A549 (cell line): ENCODE measurements at regions of chr1 and their contacts with region 1.

Region 1: GRCh38 chr1:228664399-228664914 is 70.8 kb upstream of the RHOU start:
- DNase-seq: peak; percentile 75 to 84
- ATAC-seq: peak; percentile 81 to 90
- H3K4me3 ChIP-seq: peak overlapping the region; percentile 39
- H3K27ac ChIP-seq: peak overlapping the region; percentile 48 to 68; a peak in 3 of 6 replicates
- H3K4me1 ChIP-seq: no peaks in the 10 kb centered on the region
- CTCF ChIP-seq: peak; percentile 94
- EP300 ChIP-seq: no peak
- POLR2A ChIP-seq: no peak
- RAD21 ChIP-seq: peak; percentile 96 to 97

Region 2: GRCh38 chr1:227869851-227870305 is 794.6 kb before region 1 on chr1:
- CTCF ChIA-PET with region 1: no interaction called
- POLR2A ChIA-PET with region 1: no interaction called
- DNase-seq: no peak
- ATAC-seq: peak in 1 of 2 experiments; percentile 30; a peak in 2 of 6 replicates
- H3K4me3 ChIP-seq: no peak overlapping the region
- H3K27ac ChIP-seq: no peak overlapping the region
- H3K4me1 ChIP-seq: no peaks in the 10 kb centered on the region
- CTCF ChIP-seq: no peak
- EP300 ChIP-seq: no peak
- POLR2A ChIP-seq: no peak
- RAD21 ChIP-seq: no peak

Region 3: DNA sequence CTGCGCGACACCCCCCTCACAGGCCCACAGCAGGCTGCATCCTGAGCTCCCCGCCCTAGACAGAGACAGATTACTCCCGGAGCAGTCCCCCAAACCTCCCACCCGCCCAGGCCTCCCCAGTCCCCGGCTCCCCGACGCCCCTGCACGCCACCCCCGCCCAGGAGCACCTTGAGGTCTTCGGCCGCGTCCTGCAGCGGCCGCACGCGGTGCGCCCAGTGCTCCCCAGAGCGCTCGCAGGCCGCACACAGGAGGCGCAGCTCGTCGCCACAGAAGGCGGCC is 258.5 kb before region 1 on chr1:
- CTCF ChIA-PET with region 1: no interaction called
- POLR2A ChIA-PET with region 1: interaction called, 16 read pairs
- DNase-seq: no peak
- ATAC-seq: peak in 1 of 2 experiments; percentile 13; a peak in 3 of 6 replicates
- H3K4me3 ChIP-seq: peak overlapping the region; percentile 97
- H3K27ac ChIP-seq: peak overlapping the region; percentile 94
- H3K4me1 ChIP-seq: peaks cover 30% of the 10 kb centered on the region
- CTCF ChIP-seq: no peak
- EP300 ChIP-seq: no peak
- POLR2A ChIP-seq: no peak
- RAD21 ChIP-seq: no peak

Region 4: DNA sequence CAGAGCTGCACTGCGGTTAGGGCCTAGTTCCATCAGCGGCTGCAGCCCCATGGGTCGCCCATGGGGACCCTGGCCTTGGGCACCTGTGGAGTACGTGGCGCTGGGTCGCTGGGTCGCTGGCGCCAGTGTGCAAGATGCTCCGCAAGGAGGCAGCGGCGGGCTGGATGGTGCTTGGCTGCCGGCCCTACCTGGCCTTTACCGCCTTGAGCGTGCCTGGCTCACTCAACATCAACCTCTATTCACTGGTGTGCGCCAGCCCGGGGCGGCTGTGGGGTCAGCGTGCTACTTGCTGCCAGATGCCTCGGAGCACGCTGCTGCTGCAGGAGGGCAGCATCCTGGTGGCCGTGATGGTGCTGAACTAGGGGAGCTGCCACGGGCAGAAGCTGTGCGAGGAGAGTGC is 14.3 kb before region 1 on chr1:
- CTCF ChIA-PET with region 1: interaction called, 22 read pairs
- POLR2A ChIA-PET with region 1: no interaction called
- DNase-seq: no peak
- ATAC-seq: no peak
- H3K4me3 ChIP-seq: no peak overlapping the region
- H3K27ac ChIP-seq: no peak overlapping the region
- H3K4me1 ChIP-seq: peaks cover 14% of the 10 kb centered on the region
- CTCF ChIP-seq: no peak
- EP300 ChIP-seq: no peak
- POLR2A ChIP-seq: no peak
- RAD21 ChIP-seq: no peak

Region 5: DNA sequence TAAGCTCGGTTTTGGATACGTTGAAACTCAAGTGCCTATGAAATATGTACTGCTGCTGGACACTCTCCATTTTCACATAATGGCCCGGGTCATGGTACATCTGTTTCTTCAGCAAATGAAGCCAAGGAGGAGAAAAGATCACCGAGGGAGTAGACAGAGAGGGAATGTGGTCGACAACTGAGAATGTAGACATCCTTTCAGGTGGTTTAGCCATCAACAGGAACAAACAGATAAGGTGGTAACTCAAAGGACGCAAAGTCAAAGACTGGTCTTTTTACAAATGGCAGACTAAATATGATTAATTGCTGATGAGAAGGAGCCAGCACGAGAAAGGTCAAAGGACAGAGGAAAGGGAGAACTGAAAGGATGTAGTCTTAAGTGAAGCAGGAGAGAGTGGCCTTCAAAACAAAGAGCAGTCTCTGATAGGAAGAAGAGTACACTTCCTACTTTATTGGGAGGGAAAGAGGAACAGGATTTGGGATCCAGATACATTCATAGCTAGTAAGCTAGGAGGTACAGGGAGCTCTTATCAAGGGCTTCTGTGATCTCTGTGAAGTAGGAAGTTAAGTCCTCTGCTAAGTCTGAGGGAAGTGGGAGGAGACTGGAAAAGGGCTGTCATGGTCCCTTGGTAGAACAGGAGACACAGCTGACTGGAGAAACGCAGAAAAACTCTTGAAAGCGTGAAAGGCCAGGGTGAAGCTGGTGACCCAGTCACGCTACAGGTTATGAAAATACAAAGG is 815.4 kb after region 1 on chr1:
- CTCF ChIA-PET with region 1: interaction called, 17 read pairs
- POLR2A ChIA-PET with region 1: no interaction called
- DNase-seq: no peak
- ATAC-seq: no peak
- H3K4me3 ChIP-seq: no peak overlapping the region
- H3K27ac ChIP-seq: no peak overlapping the region
- H3K4me1 ChIP-seq: no peaks in the 10 kb centered on the region
- CTCF ChIP-seq: no peak
- EP300 ChIP-seq: no peak
- POLR2A ChIP-seq: no peak
- RAD21 ChIP-seq: no peak

Region 6: DNA sequence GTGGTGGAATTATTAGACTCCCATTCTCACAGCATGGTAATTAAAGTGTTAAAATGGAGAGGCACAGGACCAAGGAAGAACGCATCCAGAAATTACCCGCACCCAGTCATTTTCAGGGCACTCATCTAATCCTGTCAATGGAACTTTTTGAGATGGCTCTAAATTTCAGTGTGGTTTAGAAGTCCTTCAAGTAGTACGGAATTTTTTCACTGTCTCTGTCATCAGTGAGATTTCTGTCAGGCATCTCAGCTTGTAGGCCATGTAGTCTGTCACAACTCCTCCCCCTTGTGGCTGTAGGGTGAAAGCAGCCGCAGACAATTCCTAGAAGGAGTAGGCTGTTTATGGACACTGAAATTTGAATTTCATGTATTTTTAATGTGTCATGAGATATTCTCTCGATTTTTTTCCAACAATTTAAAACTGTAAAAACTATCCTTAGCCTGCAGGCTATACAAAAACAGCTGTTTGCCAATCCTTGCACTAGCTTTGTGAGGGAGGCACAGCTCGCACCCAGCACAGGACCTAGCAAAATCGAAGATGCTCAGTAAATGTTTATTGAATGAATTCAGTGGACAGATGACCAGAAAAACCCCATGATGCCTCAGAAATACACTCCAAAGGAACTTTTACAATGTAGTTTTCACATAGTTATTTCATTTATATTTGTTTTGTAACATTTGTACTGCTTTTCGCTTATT is 850.3 kb after region 1 on chr1:
- CTCF ChIA-PET with region 1: interaction called, 11 read pairs
- POLR2A ChIA-PET with region 1: no interaction called
- DNase-seq: peak; percentile 64 to 75
- ATAC-seq: peak; percentile 99
- H3K4me3 ChIP-seq: no peak overlapping the region
- H3K27ac ChIP-seq: no peak overlapping the region
- H3K4me1 ChIP-seq: no peaks in the 10 kb centered on the region
- CTCF ChIP-seq: peak; percentile 73
- EP300 ChIP-seq: no peak
- POLR2A ChIP-seq: no peak
- RAD21 ChIP-seq: peak; percentile 61 to 69